ENCODE measurements at regions of chr19 and their contacts with region 1.

Region 1: GRCh38 chr19:45939792-45940514 is 25.4 kb upstream of the NANOS2 start:
- DNase-seq: no peak
- H3K4me3 Mint-ChIP-seq: no peak overlapping the region
- H3K27ac Mint-ChIP-seq: no peak overlapping the region
- H3K4me1 Mint-ChIP-seq: peaks cover 3% of the 10 kb centered on the region
- H3K27me3 Mint-ChIP-seq: peaks cover 41% of the 10 kb centered on the region

Region 2: DNA sequence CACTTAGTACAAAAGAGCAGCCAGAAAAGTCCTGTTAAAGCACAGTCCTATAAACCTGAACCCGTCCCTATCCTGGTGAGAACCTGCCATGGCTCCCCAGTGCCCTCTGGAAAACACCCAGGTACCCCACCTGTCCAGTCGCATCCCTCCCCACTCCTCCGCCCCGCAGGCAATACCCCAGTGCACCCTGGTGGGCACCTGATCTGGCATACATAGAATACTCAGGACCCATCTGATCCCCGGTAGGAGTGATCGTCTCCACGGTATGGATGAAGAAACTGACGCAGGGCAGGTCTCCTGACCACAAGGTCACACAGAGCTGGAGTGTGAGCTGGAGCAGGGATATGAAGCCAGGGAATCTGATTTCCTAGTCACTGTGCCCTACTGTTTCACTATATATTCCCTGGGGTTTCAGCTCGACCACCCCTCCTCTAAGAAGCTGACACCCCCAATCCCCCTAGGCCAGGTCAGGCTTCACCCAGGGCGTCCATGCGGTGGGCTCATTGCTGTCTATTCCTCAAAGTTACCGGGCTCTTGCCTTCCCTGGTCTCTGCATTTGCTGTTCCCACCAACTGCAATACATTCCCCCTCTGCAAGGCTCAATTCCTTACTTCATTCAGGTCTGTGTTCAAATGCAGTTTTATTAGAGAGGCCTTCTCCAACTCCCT is 221.8 kb before region 1 on chr19:
- CTCF ChIA-PET with region 1: no interaction called
- intact Hi-C with region 1: no loop called
- DNase-seq: no peak
- H3K4me3 Mint-ChIP-seq: peak overlapping the region; percentile 96
- H3K27ac Mint-ChIP-seq: peak overlapping the region; percentile 97
- H3K4me1 Mint-ChIP-seq: peaks cover 45% of the 10 kb centered on the region
- H3K27me3 Mint-ChIP-seq: no peaks in the 10 kb centered on the region

Region 3: DNA sequence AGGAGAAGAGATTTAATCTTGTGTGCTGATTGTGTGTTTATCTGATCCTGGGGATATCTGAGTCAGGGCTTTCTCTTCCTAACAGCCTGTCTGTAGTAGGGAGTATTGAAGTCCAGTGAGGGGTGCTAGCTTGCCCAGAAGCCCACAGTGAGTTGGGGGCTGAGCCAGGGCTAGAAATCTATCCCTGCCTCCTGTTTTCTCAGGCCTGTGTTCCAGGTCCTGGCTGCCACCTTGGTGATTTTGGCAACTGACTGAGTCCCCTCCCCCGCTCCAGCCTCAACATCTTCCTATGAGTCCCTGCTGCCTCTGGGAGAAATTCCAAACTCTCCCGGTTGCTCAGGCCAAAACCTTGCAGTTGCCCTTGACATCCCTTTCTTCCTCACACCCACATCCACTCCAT is 41.4 kb after region 1 on chr19:
- CTCF ChIA-PET with region 1: no interaction called
- intact Hi-C with region 1: loop called (anchors 5 kb)
- DNase-seq: no peak
- H3K4me3 Mint-ChIP-seq: no peak overlapping the region
- H3K27ac Mint-ChIP-seq: no peak overlapping the region
- H3K4me1 Mint-ChIP-seq: no peaks in the 10 kb centered on the region
- H3K27me3 Mint-ChIP-seq: peaks cover 8% of the 10 kb centered on the region

Region 4: GRCh38 chr19:46133101-46133682 is 193.2 kb after region 1 on chr19:
- CTCF ChIA-PET with region 1: no interaction called
- intact Hi-C with region 1: no loop called
- DNase-seq: no peak
- H3K4me3 Mint-ChIP-seq: no peak overlapping the region
- H3K27ac Mint-ChIP-seq: peak overlapping the region; percentile 25
- H3K4me1 Mint-ChIP-seq: peaks cover 3% of the 10 kb centered on the region
- H3K27me3 Mint-ChIP-seq: peaks cover 37% of the 10 kb centered on the region

Region 5: GRCh38 chr19:46271481-46272197 is 331.7 kb after region 1 on chr19:
- CTCF ChIA-PET with region 1: no interaction called
- intact Hi-C with region 1: no loop called
- DNase-seq: peak; percentile 34
- H3K4me3 Mint-ChIP-seq: no peak overlapping the region
- H3K27ac Mint-ChIP-seq: no peak overlapping the region
- H3K4me1 Mint-ChIP-seq: peaks cover 8% of the 10 kb centered on the region
- H3K27me3 Mint-ChIP-seq: peaks cover 31% of the 10 kb centered on the region

Region 6: GRCh38 chr19:46328079-46328478 is 388.1 kb after region 1 on chr19:
- CTCF ChIA-PET with region 1: no interaction called
- intact Hi-C with region 1: no loop called
- DNase-seq: no peak
- H3K4me3 Mint-ChIP-seq: no peak overlapping the region
- H3K27ac Mint-ChIP-seq: no peak overlapping the region
- H3K4me1 Mint-ChIP-seq: no peaks in the 10 kb centered on the region
- H3K27me3 Mint-ChIP-seq: peaks cover 2% of the 10 kb centered on the region